HEK293 (cell line): ENCODE measurements at regions of chr13 and their contacts with region 1.

Region 1: DNA sequence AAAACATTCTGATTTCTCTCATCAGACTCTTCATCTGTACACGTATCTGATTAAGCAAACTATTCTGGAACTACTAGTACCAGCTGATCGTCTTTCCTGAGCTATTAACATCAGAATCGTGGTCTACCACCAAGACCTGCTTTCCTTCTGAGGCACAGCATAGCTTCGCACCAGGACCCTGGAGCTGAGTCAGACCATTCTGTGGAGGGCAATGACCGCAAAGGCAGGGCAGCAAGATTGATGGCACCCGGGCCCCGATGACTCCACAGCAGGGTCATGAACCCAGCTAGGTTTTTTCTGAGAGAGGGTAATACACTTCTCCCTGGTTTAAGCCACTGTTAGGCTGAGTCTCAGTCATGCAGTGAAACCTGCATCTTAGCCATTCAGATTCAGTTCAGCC is 158.7 kb upstream of the GPR12 start:
- H3K4me3 ChIP-seq: no peak overlapping the region
- H3K27ac ChIP-seq: no peak overlapping the region
- H3K4me1 ChIP-seq: 0 out of 2 replicates have a peak, but pooled peaks cover 2% of the 10 kb centered on the region
- CTCF ChIP-seq: no peak

Region 2: DNA sequence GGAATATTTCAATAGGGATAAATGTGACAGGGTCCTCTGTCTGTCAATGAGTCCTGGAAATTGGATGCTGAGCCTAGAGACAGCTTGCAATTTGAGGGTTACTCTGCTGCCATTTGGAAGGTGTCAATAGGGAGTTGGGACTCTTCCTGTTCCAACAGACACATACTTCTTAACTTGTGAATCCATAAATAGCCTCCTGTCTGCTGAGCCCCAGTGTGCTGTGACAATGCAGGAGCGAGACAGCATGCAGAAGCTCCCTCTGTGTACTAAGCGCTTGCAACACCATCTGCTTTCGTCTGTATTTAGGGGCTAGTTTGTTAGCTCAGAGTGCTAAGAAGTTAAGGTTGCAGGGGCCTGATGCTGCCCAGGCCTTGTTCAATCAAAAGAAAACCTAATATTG is 100.3 kb before region 1 on chr13:
- CTCF ChIA-PET with region 1: no interaction called
- POLR2A ChIA-PET with region 1: no interaction called
- H3K4me3 ChIP-seq: no peak overlapping the region
- H3K27ac ChIP-seq: no peak overlapping the region
- H3K4me1 ChIP-seq: no peaks in the 10 kb centered on the region
- CTCF ChIP-seq: no peak

Region 3: DNA sequence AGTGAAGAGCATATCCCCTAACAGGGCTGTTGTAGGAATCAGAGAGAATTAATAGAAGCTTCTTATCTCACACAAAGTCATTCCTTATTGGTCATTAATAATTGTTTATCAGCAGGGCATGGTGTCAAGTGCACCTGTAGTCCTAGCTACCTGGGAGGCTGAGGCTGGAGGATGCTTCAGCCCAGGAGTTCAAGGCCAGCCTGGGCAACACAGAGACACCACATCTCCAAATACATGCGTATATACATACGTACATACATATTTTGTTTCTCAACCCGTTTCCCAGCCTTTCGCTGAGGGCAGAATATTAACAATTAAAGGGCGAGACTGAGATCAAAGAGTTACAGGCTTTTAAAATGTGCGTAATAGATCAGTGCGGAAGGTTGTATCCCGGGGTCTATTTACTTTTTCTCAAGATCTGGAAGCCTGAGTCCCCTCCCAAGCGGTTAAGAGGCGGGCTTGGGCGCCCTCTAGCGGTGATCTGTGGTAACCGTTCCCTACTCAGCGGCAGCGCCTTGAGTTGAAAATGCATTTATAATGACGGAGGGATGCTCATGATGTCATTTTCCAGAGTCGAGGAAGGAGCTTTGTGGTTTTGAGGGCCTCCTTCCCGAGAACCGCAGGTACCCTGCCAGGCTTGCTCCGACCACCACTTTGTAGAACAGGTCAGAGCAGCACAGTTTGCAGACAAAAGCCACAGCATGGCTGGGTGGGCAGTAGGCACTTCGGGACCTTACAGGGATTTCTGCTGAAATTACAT is 10.8 kb after region 1 on chr13:
- CTCF ChIA-PET with region 1: interaction called, 10 read pairs
- POLR2A ChIA-PET with region 1: no interaction called
- H3K4me3 ChIP-seq: no peak overlapping the region
- H3K27ac ChIP-seq: no peak overlapping the region
- H3K4me1 ChIP-seq: no peaks in the 10 kb centered on the region
- CTCF ChIP-seq: peak; percentile 51; the same call in 1 of the 2 replicates